Endothelial cell of umbilical vein (primary cell): ENCODE measurements at regions of chr17 and their contacts with region 1.

Region 1: DNA sequence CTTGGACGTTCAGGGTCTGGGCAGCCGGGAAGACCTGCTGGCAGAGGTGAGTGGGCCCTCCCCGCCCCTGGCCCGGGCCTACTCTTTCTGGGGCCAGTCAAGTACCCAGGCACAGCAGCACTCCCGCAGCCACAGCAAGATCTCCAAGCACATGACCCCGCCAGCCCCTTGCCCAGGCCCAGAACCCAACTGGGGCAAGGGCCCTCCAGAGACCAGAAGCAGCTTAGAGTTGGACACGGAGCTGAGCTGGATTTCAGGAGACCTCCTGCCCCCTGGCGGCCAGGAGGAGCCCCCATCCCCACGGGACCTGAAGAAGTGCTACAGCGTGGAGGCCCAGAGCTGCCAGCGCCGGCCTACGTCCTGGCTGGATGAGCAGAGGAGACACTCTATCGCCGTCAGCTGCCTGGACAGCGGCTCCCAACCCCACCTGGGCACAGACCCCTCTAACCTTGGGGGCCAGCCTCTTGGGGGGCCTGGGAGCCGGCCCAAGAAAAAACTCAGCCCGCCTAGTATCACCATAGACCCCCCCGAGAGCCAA is 8.6 kb upstream of the ABCC3 start:
- DNase-seq: peak; percentile 65
- H3K4me3 ChIP-seq: no peak overlapping the region
- H3K27ac ChIP-seq: no peak overlapping the region
- H3K4me1 ChIP-seq: peaks cover 2% of the 10 kb centered on the region
- H3K27me3 ChIP-seq: peaks cover 0 to 5% of the 10 kb centered on the region in 2 experiments
- CTCF ChIP-seq: peak; percentile 67 to 94
- POLR2A ChIP-seq: no peak

Region 2: DNA sequence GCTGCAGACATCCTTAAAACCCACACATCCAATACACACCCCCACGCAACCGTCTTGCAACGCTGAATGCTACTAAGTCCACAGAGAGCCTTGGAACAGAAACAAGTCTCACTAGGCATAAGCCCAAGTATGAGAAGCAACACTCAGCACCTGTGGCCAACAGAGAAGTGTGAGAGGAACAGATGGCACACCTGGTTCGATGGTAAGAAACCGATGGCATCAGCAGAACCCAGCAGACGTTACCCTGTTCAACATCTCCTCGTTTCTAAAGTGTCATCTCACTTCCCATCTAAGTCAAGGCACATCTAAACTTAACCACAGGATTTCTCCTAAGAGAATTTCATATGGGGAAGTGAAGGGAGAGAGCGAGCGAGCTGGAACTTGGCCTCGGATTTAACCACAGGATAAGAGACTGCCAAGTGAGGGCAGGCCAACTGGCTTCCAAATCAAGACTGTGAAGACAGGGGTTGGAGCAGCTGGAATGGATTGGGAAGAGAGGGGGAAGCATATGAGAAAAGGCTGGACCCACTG is 1009.4 kb before region 1 on chr17:
- CTCF ChIA-PET with region 1: no interaction called
- POLR2A ChIA-PET with region 1: no interaction called
- dilution Hi-C with region 1: no loop called
- intact Hi-C with region 1: no loop called
- DNase-seq: no peak
- H3K4me3 ChIP-seq: no peak overlapping the region
- H3K27ac ChIP-seq: no peak overlapping the region
- H3K4me1 ChIP-seq: peaks cover 9% of the 10 kb centered on the region
- H3K27me3 ChIP-seq: no peaks in the 10 kb centered on the region
- CTCF ChIP-seq: no peak
- POLR2A ChIP-seq: no peak

Region 3: DNA sequence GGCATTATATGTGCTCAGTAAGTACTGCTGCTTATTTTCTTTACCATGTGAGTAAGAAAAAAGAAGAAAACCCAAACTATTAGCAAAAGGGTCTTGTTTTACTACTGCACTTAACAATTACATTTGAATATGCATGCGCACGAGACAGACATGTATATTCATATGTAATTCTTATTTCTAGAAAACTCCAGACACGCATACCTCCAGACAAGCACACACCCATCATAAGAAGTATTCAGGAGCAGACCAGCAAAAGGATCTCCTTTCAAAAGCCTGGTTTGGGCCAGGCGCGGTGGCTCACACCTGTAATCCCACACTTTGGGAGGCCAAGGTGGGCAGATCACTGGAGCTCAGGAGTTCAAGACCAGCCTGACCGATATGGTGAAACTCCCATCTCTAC is 236.6 kb before region 1 on chr17:
- CTCF ChIA-PET with region 1: no interaction called
- POLR2A ChIA-PET with region 1: no interaction called
- dilution Hi-C with region 1: no loop called
- intact Hi-C with region 1: no loop called
- DNase-seq: no peak
- H3K4me3 ChIP-seq: no peak overlapping the region
- H3K27ac ChIP-seq: no peak overlapping the region
- H3K4me1 ChIP-seq: peaks cover under 1% of the 10 kb centered on the region
- H3K27me3 ChIP-seq: no peaks in the 10 kb centered on the region
- CTCF ChIP-seq: no peak
- POLR2A ChIP-seq: no peak

Region 4: DNA sequence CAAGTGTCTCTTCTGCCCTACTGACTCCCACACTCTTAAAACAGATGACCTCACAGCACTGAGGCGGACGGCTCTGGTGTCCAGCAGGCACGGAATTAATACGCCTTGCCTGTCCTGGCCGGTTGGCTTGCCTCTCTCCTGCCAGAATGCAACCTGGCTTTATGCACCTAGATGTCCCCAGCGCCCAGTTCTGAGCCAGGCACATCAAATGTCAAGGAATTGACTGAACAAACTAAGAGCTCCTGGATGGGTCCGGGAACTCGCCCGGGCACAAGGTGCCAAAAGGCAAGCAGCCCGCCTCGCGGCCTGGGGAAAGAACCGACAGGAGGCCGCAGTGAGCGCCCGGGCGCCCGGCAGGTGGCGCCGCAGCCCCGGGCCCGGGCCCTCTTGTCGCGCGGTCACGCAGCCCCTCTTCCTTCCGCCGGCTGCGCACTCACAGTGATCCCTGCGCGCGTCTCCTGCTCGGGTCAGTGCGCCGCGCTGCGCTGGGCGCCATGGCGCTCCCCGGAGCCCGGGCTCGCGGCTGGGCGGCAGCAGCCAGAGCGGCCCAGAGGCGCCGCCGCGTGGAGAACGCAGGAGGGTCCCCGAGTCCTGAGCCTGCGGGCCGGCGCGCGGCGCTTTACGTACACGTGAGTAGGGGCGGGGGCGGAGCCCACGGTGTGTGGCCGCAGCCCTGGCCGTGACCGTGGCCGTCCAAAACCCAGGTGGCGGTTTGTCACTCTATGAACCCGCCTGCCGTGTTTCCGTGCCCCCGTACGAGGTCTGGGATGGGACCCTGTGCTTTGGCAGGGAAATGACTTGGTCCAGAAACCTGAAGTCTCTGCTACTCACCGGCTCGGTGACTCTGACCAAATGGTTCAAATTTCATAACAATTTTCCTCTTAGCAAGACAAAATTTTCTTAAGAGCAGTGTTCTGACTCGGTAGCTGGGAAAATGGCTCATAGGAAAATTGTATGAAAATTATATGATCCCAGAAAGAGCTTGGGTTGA is 147.4 kb before region 1 on chr17 and contains the start of gene RSAD1:
- CTCF ChIA-PET with region 1: interaction called, 22 read pairs
- POLR2A ChIA-PET with region 1: no interaction called
- dilution Hi-C with region 1: no loop called
- intact Hi-C with region 1: loop called (anchors 1 kb)
- DNase-seq: peak; percentile 88
- H3K4me3 ChIP-seq: peak within 1 kb of the TSS; percentile 58 to 85 (median 79)
- H3K27ac ChIP-seq: peak within 1 kb of the TSS; percentile 39
- H3K4me1 ChIP-seq: peaks cover 20% of the 10 kb centered on the region
- H3K27me3 ChIP-seq: peaks cover 7 to 17% of the 10 kb centered on the region in 2 experiments
- CTCF ChIP-seq: peak; percentile 77 to 88
- POLR2A ChIP-seq: peak; percentile 94
- total RNA-seq, gene RSAD1: 33.1 and 35.5 TPM in 2 replicates

Region 5: GRCh38 chr17:50560185-50560824 is 65.8 kb before region 1 on chr17 and contains the start of gene CACNA1G:
- CTCF ChIA-PET with region 1: interaction called, 15 read pairs
- POLR2A ChIA-PET with region 1: no interaction called
- dilution Hi-C with region 1: no loop called
- intact Hi-C with region 1: no loop called
- DNase-seq: peak; percentile 70
- H3K4me3 ChIP-seq: peak within 1 kb of the TSS in 1 of 3 experiments; percentile 15
- H3K27ac ChIP-seq: no peak within 1 kb of the TSS
- H3K4me1 ChIP-seq: peaks cover 7% of the 10 kb centered on the region
- H3K27me3 ChIP-seq: peaks cover 46 to 55% of the 10 kb centered on the region in 2 experiments
- CTCF ChIP-seq: no peak
- POLR2A ChIP-seq: no peak
- total RNA-seq, gene CACNA1G: not detected in 2 replicates

Region 6: DNA sequence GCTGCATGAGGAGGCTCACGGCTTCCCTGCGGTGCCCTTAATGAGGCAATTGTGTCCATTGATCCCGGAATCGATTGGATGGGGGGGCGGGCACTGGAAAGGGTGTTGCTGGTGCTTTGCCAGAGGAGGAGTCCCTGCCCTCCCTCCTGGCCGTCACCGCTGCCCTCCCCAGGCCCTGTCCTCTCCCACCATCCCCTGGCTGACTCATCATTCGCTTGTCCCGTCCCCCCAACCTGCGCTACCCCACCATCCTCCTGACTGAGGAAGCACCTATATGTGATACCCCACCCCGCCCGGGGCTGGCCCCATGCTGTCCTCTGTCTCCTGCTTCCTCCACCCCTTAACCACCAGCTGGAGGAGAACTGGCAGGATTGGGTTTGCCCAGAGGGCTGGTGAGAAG is 44.8 kb before region 1 on chr17:
- CTCF ChIA-PET with region 1: no interaction called
- POLR2A ChIA-PET with region 1: no interaction called
- dilution Hi-C with region 1: no loop called
- intact Hi-C with region 1: no loop called
- DNase-seq: no peak
- H3K4me3 ChIP-seq: no peak overlapping the region
- H3K27ac ChIP-seq: no peak overlapping the region
- H3K4me1 ChIP-seq: no peaks in the 10 kb centered on the region
- H3K27me3 ChIP-seq: peaks cover 0 to 6% of the 10 kb centered on the region in 2 experiments
- CTCF ChIP-seq: no peak
- POLR2A ChIP-seq: no peak

Region 7: GRCh38 chr17:50596191-50597037 is 29.7 kb before region 1 on chr17:
- CTCF ChIA-PET with region 1: interaction called, 11 read pairs
- POLR2A ChIA-PET with region 1: no interaction called
- dilution Hi-C with region 1: no loop called
- intact Hi-C with region 1: loop called (anchors 1 kb)
- DNase-seq: no peak
- H3K4me3 ChIP-seq: no peak overlapping the region
- H3K27ac ChIP-seq: no peak overlapping the region
- H3K4me1 ChIP-seq: no peaks in the 10 kb centered on the region
- H3K27me3 ChIP-seq: no peaks in the 10 kb centered on the region
- CTCF ChIP-seq: peak; percentile 36 to 55
- POLR2A ChIP-seq: no peak

Region 8: DNA sequence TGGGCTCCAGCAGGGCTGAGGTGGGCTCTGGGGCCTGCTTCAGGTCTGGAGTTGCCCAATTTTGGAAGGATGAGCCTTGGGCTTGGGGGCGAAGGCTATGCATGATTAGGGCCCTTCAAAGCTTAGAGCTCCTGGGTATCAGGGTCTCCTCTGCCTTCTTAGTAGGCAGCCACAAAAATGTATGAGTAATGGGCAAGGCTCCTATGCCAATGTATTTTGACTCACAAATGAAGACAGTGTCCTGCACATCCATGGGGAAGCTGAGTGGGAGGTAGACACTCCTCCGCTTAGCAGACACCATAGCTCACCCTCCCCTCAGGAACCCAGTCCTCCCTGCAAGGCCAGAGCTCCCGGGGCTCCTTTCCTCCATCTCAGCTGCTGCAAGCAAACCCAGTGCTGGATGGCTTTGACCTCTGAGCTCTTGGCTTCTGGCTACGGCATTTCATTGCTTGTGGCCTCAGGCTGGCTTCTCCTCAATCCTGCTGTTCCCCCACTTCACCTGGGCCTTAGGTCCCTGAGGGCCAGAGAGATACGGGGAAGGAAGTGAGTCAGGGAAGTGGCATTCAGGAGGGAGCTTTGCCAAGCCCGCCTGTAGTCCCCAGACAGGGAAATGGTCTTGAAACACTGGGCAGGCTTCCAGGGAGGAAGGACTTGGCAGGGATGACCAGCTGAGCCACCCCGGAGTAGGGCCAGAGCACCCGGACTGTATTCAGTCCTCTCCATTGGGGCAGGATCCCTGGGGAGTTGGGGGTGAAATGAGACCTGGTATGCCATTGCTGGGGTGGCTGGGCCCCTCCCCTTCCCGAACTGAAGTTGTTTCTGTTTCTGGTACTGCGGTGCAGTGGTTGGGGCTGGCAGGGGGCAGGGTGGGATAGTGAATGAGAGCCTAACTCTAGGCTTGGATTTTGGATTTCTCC is 13.0 kb after region 1 on chr17:
- CTCF ChIA-PET with region 1: interaction called, 96 read pairs
- POLR2A ChIA-PET with region 1: no interaction called
- dilution Hi-C with region 1: no loop called
- intact Hi-C with region 1: no loop called
- DNase-seq: peak; percentile 93
- H3K4me3 ChIP-seq: no peak overlapping the region
- H3K27ac ChIP-seq: peak overlapping the region; percentile 72
- H3K4me1 ChIP-seq: peaks cover 46% of the 10 kb centered on the region
- H3K27me3 ChIP-seq: no peaks in the 10 kb centered on the region
- CTCF ChIP-seq: no peak
- POLR2A ChIP-seq: no peak

Region 9: DNA sequence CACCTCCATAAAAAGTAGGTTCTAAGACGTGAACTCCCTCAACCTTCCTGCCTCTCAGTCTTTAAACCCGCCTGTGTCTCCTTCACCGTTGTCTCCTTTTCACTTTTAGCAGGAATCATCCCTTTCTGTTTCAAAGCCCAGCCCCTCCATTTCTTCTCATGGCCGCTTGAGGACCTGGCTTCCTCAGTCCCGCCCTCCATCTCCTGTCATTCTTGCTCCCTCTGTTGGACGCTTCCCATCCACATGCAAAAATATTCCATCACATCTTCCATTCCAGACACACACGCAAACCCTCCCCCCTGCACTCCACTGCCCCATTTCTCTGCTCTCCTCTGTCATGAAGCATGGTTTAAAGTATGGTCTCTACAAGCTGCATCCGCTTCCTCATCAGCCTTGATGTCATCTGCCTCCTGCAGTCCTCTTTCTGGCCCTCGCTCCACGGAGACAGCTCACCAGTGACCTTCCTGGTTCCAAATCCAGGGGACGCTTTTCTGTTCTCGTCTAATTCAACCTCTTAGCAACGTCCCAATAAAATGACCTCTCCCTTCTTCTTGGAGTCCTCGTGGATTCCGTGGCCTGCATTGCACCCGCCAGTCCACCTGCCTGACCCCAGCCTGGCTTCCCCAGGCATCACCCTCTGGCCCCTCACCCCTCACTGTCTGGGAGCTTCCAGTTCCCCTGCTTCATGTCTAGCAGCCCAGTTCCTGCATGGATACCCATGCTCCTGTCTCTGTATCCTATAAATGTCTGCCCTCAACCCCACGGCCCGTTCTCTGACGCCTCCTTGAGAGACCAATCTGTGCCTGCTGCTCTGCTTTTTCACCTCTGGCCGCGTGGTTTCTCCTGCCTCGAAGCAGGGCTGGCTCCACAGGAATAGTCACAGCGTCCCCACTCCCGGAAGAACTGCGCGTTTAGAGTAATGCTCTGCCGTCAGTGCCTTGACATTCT is 55.4 kb after region 1 on chr17:
- CTCF ChIA-PET with region 1: interaction called, 105 read pairs
- POLR2A ChIA-PET with region 1: no interaction called
- dilution Hi-C with region 1: no loop called
- intact Hi-C with region 1: loop called (anchors 1 kb)
- DNase-seq: peak; percentile 83
- H3K4me3 ChIP-seq: no peak overlapping the region
- H3K27ac ChIP-seq: no peak overlapping the region
- H3K4me1 ChIP-seq: peaks cover 3% of the 10 kb centered on the region
- H3K27me3 ChIP-seq: no peaks in the 10 kb centered on the region
- CTCF ChIP-seq: peak; percentile 71 to 77
- POLR2A ChIP-seq: no peak

Region 10: GRCh38 chr17:50697663-50698274 is 71.7 kb after region 1 on chr17:
- CTCF ChIA-PET with region 1: interaction called, 71 read pairs
- POLR2A ChIA-PET with region 1: no interaction called
- dilution Hi-C with region 1: no loop called
- intact Hi-C with region 1: loop called (anchors 1 kb)
- DNase-seq: no peak
- H3K4me3 ChIP-seq: no peak overlapping the region
- H3K27ac ChIP-seq: no peak overlapping the region
- H3K4me1 ChIP-seq: no peaks in the 10 kb centered on the region
- H3K27me3 ChIP-seq: no peaks in the 10 kb centered on the region
- CTCF ChIP-seq: no peak
- POLR2A ChIP-seq: no peak